Breast epithelium (tissue), 4 donors: ENCODE measurements at regions of chr16 and their contacts with region 1.

Region 1: DNA sequence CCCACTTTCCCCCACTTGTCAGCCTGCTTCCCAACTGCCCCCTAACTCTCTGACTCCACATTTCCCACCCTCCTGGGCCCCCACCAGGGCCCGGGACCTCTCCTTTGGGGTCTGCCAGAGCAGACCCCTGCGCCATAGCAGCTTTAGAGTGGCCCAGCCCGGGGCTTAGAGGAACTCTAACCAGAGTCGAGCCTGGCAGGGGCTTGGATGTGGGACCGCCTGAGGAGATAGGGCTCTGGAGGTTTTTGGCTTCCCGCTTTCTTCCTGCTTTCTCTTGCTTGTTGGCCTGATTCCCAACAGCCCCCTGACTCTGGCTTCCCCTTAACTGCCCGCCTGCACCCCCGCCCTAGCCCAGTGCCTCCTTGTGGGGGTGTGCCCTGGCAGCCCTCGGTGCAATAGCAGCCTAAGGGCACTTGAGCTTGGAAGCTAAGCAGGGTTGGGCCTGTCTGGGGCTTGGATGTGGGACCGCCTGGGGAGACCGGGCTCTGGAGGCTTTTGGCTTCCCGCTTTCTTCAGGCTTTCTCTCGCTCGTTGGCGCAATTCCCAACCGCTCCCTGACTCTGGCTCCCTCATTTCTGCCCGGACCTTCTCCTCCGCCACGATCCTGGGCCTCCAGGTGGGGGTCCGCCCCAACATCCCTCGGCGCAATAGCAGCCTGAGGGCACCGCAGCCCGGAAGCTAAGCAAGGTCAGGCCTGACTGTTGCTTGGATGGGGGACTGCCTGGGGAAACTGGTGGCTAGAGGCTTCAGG is 2292.0 kb downstream of the TP53TG3F start:
- DNase-seq: no peak
- H3K4me3 ChIP-seq: no peak overlapping the region
- H3K27ac ChIP-seq: no peak overlapping the region
- H3K4me1 ChIP-seq: no peaks in the 10 kb centered on the region
- H3K27me3 ChIP-seq: no peaks in the 10 kb centered on the region
- CTCF ChIP-seq: no peak
- POLR2A ChIP-seq: no peak

Region 2: GRCh38 chr16:35725949-35726348 is 25.4 kb before region 1 on chr16:
- intact Hi-C with region 1: loop called (anchors 2 kb)
- DNase-seq: no peak
- H3K4me3 ChIP-seq: no peak overlapping the region
- H3K27ac ChIP-seq: no peak overlapping the region
- H3K4me1 ChIP-seq: no peaks in the 10 kb centered on the region
- H3K27me3 ChIP-seq: no peaks in the 10 kb centered on the region
- CTCF ChIP-seq: no peak
- POLR2A ChIP-seq: no peak

Region 3: DNA sequence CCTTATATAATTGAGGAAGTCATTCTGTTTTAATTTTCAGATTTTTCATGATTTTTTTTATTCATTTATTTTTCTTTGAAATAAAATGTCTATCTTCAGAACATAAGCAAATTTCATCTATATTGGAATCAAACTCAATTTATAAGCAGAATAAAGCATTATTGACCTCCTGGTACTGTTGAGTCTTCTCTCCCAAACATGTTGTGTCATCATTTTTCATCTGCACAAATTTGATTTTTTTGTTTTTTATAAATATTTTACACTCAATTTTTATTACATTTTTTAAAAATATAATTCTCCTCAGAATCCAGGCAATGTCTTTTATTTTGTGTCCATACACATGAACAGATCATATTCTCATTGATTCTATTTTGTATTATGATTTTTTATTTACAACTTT is 72.0 kb after region 1 on chr16:
- intact Hi-C with region 1: no loop called
- DNase-seq: no peak
- H3K4me3 ChIP-seq: no peak overlapping the region
- H3K27ac ChIP-seq: no peak overlapping the region
- H3K4me1 ChIP-seq: no peaks in the 10 kb centered on the region
- H3K27me3 ChIP-seq: no peaks in the 10 kb centered on the region
- CTCF ChIP-seq: no peak
- POLR2A ChIP-seq: no peak